CD4-positive, alpha-beta memory T cell (primary cell): ENCODE measurements at regions of chr7 and their contacts with region 1.

Region 1: DNA sequence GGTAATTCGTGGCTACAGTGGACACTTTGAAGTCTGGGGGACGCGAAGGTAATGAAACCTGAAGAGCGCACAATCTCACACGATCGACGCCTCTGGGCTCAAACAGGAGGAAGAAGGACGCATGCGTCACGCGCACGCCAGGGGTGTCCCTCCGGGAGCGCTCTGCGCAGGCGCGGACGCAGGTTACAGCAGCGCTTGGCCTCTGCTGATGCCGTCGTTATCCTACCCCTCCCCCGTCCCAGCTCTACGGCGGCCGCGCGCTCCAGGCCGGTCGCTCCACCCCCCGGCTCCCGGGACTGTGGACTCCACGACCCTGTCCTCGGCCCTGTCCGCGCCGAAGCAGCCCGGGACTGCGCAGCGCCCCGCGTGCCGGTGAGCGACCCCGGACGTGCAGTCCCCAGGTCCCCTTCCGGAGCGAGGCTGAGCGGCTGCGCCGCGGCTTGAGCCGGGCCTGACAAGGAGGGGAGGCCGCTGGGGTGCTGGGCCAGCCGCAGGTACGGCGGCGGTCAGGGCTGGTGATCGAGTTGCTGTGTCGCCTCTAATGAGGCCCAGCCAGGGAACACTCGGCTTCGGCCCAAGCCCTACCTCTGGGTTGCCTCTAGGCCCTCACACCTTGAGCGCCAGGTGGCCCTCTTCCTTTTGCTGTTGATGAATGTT is at the start of gene TMEM106B:
- DNase-seq: peak; percentile 95 to 98 (median 98)
- H3K4me3 ChIP-seq: peak within 1 kb of the TSS; percentile 70 to 94
- H3K4me3 Mint-ChIP-seq: peak within 1 kb of the TSS; percentile 92 to 100 (median 98)
- H3K27ac ChIP-seq: peak within 1 kb of the TSS; percentile 98
- H3K27ac Mint-ChIP-seq: peak within 1 kb of the TSS; percentile 95 to 100 (median 100)
- H3K4me1 ChIP-seq: peaks cover 46% of the 10 kb centered on the region
- H3K4me1 Mint-ChIP-seq: peaks cover 23 to 40% (median 33%) of the 10 kb centered on the region in 4 donors
- H3K27me3 ChIP-seq: no peaks in the 10 kb centered on the region
- H3K27me3 Mint-ChIP-seq: peaks cover 0 to 2% of the 10 kb centered on the region in 2 donors
- total RNA-seq, gene TMEM106B: 56.9 to 62.2 TPM

Region 2: GRCh38 chr7:12111422-12112405 is 99.5 kb before region 1 on chr7:
- CTCF ChIA-PET with region 1: interaction called, 8 read pairs
- POLR2A ChIA-PET with region 1: interaction called, 5 read pairs
- intact Hi-C with region 1: loop called (anchors 5 kb)
- DNase-seq: peak in 4 of 5 donors; percentile 12 to 22 (median 19)
- H3K4me3 ChIP-seq: no peak overlapping the region
- H3K4me3 Mint-ChIP-seq: peak overlapping the region; percentile 74 to 85 (median 79)
- H3K27ac ChIP-seq: no peak overlapping the region
- H3K27ac Mint-ChIP-seq: no peak overlapping the region
- H3K4me1 ChIP-seq: peaks cover 6% of the 10 kb centered on the region
- H3K4me1 Mint-ChIP-seq: peaks cover 7 to 18% (median 13%) of the 10 kb centered on the region in 4 donors
- H3K27me3 ChIP-seq: peaks cover 9% of the 10 kb centered on the region
- H3K27me3 Mint-ChIP-seq: peaks cover 25 to 26% of the 10 kb centered on the region in 2 donors

Region 3: DNA sequence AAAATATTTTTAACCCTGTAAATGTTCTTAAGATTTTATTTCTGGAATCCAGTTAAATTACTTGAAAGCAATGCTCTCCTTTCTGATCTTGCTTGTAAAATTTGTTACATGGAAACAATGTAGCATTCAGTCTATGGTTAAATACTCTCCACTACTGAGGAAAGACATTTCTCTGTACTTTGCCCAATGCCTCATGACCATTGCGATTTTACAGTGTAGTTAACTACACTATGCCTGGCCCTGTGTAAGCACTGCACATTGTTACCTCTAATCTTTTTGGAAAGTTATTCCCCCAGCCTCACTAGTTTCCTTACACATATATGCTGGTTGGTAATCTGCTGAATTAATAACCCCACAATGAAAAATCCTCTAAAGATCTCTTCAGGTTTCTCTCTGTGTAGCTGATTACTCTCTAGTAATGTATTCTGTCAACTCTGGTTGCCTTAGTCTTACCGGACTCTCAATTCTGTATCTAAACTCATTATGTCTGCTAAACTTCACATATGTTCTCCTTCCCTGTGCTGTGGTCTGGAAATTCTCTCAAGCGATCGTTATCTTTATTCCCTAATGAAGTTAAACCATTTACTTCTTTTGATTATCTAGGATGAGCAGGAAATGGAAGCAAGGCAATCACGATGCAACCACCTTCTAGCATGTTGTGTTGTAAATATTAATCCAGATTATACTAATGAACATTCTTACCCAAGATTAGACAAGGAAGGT is 58.8 kb before region 1 on chr7:
- CTCF ChIA-PET with region 1: no interaction called
- POLR2A ChIA-PET with region 1: no interaction called
- intact Hi-C with region 1: no loop called
- DNase-seq: no peak
- H3K4me3 ChIP-seq: no peak overlapping the region
- H3K4me3 Mint-ChIP-seq: no peak overlapping the region
- H3K27ac ChIP-seq: no peak overlapping the region
- H3K27ac Mint-ChIP-seq: no peak overlapping the region
- H3K4me1 ChIP-seq: no peaks in the 10 kb centered on the region
- H3K4me1 Mint-ChIP-seq: peaks cover 0 to 6% (median 4%) of the 10 kb centered on the region in 4 donors
- H3K27me3 ChIP-seq: no peaks in the 10 kb centered on the region
- H3K27me3 Mint-ChIP-seq: peaks cover 0 to 2% of the 10 kb centered on the region in 2 donors

Region 4: GRCh38 chr7:12222889-12223579 is 11.9 kb after region 1 on chr7:
- CTCF ChIA-PET with region 1: interaction called, 5 read pairs
- POLR2A ChIA-PET with region 1: interaction called, 12 read pairs
- intact Hi-C with region 1: loop called (anchors 1 kb)
- DNase-seq: peak in 4 of 5 donors; percentile 44 to 57 (median 50)
- H3K4me3 ChIP-seq: no peak overlapping the region
- H3K4me3 Mint-ChIP-seq: peak overlapping the region; percentile 26 to 85 (median 68)
- H3K27ac ChIP-seq: peak overlapping the region; percentile 30
- H3K27ac Mint-ChIP-seq: peak overlapping the region; percentile 49 to 93 (median 79)
- H3K4me1 ChIP-seq: peaks cover 44% of the 10 kb centered on the region
- H3K4me1 Mint-ChIP-seq: peaks cover 33 to 67% (median 53%) of the 10 kb centered on the region in 4 donors
- H3K27me3 ChIP-seq: no peaks in the 10 kb centered on the region
- H3K27me3 Mint-ChIP-seq: no peaks in the 10 kb centered on the region

Region 5: DNA sequence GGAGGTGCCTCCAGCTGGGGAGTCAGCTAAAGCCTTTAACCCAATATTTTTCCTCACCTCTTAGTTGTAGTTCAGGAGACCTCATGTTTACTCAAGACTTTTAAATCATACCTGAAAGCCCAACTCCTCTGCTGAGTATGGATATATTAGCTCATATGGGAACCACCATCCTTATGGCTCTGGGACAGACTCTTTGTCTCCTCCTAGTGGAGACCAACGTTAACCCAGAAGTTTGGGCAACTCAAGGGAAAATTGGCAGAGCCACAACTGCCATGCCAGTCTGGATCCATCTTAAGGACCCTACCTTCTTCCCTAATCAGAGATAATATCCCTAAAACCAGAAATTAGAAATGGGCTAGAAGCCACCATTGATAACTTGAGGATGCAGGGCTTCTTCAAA is 80.7 kb after region 1 on chr7:
- CTCF ChIA-PET with region 1: interaction called, 9 read pairs
- POLR2A ChIA-PET with region 1: no interaction called
- intact Hi-C with region 1: loop called (anchors 1 kb)
- DNase-seq: peak in 2 of 5 donors; percentile 9 to 11
- H3K4me3 ChIP-seq: no peak overlapping the region
- H3K4me3 Mint-ChIP-seq: no peak overlapping the region
- H3K27ac ChIP-seq: no peak overlapping the region
- H3K27ac Mint-ChIP-seq: no peak overlapping the region
- H3K4me1 ChIP-seq: no peaks in the 10 kb centered on the region
- H3K4me1 Mint-ChIP-seq: peaks cover 0 to 4% (median 0%) of the 10 kb centered on the region in 4 donors
- H3K27me3 ChIP-seq: no peaks in the 10 kb centered on the region
- H3K27me3 Mint-ChIP-seq: peaks cover 0 to 3% of the 10 kb centered on the region in 2 donors

Region 6: DNA sequence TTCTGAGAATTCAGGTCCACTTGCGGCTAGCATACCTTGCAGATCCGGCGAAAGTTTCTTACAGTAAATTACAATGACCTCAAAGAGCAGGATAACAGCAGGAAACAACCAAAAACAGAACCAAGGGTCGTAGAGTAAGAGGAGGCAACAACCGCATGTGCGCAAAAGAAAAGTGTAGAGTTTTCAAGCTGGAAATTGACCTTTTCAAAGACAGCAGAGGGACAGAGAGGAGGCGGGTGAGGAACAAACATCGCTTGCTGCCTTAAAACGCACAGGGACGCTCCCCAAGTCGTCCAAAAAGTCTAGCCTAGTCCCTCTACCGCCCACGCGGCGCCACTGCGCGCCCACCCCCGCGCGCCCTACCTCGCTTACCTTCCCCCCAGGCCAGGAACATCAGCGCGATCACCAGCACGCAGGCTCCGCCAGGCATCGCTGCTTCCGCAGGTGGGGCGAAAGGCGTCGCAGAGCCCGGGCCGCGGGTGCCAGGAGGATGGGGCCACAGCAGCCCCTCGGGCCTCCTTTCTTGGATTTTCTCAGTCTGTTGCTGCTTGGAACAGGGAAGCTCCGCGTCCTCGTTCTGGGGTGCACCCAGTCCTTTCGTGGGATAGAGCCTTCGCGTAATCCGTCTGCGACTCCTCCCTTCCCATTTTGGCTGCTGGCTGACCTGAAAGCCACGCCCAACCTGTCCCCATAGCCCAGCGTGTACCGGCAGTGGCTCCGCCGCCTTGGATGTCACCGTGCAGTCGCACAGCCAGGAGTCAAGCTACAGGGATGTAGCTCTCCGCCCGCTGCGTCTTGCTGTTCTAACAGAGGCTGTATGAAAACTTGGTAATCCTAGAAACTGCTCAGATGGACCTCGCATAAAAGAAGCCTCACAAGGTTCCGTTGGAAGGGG is 192.4 kb after region 1 on chr7 and contains the start of gene VWDE:
- CTCF ChIA-PET with region 1: no interaction called
- POLR2A ChIA-PET with region 1: no interaction called
- intact Hi-C with region 1: loop called (anchors 2 kb)
- DNase-seq: peak; percentile 31 to 70 (median 44)
- H3K4me3 ChIP-seq: peak within 1 kb of the TSS; percentile 38 to 54
- H3K4me3 Mint-ChIP-seq: peak within 1 kb of the TSS; percentile 82 to 95 (median 90)
- H3K27ac ChIP-seq: peak within 1 kb of the TSS; percentile 29
- H3K27ac Mint-ChIP-seq: peak within 1 kb of the TSS; percentile 30 to 92 (median 82)
- H3K4me1 ChIP-seq: peaks cover 13% of the 10 kb centered on the region
- H3K4me1 Mint-ChIP-seq: peaks cover 12 to 29% (median 17%) of the 10 kb centered on the region in 4 donors
- H3K27me3 ChIP-seq: no peaks in the 10 kb centered on the region
- H3K27me3 Mint-ChIP-seq: peaks cover 6 to 7% of the 10 kb centered on the region in 2 donors
- total RNA-seq, gene VWDE: 8.9 to 9.0 TPM